ENCODE measurements at regions of chr4 and their contacts with region 1.

Region 1: DNA sequence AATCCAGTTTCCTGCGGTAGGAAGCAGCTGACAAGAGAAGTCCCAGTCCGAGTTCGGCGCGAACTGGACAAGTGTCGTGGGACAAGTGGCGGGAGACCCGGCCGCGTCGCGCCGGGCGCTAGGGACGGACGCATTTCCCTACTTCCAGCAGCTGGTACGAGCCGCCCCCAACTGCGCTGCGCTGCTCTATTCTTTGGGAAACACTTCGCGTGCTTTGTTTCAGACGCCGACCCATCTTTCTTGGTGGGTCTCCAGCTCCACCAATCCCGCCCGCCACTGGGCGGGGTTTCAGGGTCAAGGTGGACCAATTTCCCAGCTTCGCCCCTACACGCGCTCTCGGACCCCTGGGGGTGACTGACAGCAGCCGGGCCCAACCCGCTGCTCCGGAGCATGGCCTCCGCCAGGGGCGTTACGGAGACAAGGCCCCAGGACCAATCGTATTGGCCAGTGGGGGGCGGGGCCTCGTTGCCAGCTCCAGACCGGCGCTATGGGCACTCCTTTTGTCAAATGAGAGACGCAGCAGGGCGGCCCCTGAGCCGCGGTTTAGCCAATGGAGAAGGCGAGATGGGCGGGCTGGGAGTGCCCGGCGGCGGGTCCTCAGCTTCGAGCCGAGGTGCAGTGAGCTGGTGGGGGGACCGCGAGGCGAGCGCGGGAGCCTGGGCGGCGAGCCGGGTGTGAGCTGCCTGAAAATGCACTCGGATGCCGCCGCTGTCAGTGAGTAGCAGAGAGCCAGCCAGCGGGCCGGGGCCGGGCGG is at the start of gene DCUN1D4:
- DNase-seq: peak; percentile 93 to 98 (median 95)
- ATAC-seq: peak; percentile 94
- H3K4me3 ChIP-seq: peak within 1 kb of the TSS; percentile 85
- H3K4me3 Mint-ChIP-seq: peak within 1 kb of the TSS; percentile 92 to 100 (median 96)
- H3K27ac ChIP-seq: peak within 1 kb of the TSS; percentile 76
- H3K27ac Mint-ChIP-seq: peak within 1 kb of the TSS; percentile 87 to 98 (median 92)
- H3K4me1 ChIP-seq: peaks cover 4% of the 10 kb centered on the region in 2 donors
- H3K4me1 Mint-ChIP-seq: peaks cover 9 to 29% (median 23%) of the 10 kb centered on the region in 7 donors
- H3K27me3 ChIP-seq: no peaks in the 10 kb centered on the region
- H3K27me3 Mint-ChIP-seq: peaks cover 0 to 11% (median 0%) of the 10 kb centered on the region in 5 donors
- total RNA-seq, gene DCUN1D4: 31.3 to 60.7 (median 35.3) TPM

Region 2: DNA sequence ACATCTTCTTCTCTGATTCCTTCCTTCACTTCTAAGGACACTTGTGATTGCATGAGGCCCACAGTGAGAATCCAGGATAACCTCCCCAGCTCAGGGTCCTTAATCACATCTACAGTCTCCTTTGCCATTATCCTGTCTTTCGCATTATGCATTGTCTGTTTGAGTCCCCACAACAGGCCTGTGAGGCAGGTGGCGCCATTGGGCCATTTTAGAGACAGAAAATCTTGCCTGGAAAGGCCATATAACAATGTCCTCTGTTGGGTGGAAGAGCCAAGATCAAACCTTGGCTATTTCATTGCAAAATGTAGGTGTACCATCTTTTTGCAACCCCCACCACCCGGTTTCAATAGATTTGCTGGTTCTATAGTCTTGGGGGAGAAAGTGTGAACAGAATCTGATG is 11.6 kb before region 1 on chr4:
- CTCF ChIA-PET with region 1: interaction called, 6 read pairs
- POLR2A ChIA-PET with region 1: no interaction called
- intact Hi-C with region 1: loop called in 1 of 2 experiments (anchors 1 kb)
- DNase-seq: peak; percentile 39 to 70 (median 58)
- ATAC-seq: peak; percentile 77
- H3K4me3 ChIP-seq: no peak overlapping the region
- H3K4me3 Mint-ChIP-seq: no peak overlapping the region
- H3K27ac ChIP-seq: no peak overlapping the region
- H3K27ac Mint-ChIP-seq: no peak overlapping the region
- H3K4me1 ChIP-seq: no peaks in the 10 kb centered on the region
- H3K4me1 Mint-ChIP-seq: no peaks in the 10 kb centered on the region
- H3K27me3 ChIP-seq: no peaks in the 10 kb centered on the region
- H3K27me3 Mint-ChIP-seq: peaks cover 0 to 15% (median 7%) of the 10 kb centered on the region in 5 donors

Region 3: GRCh38 chr4:52038103-52038912 is 195.6 kb after region 1 on chr4 and contains the start of gene SGCB:
- CTCF ChIA-PET with region 1: no interaction called
- POLR2A ChIA-PET with region 1: no interaction called
- intact Hi-C with region 1: loop called (anchors 1 kb)
- DNase-seq: peak; percentile 55 to 82 (median 69)
- ATAC-seq: peak; percentile 93
- H3K4me3 ChIP-seq: peak within 1 kb of the TSS; percentile 61
- H3K4me3 Mint-ChIP-seq: peak within 1 kb of the TSS; percentile 81 to 92 (median 89)
- H3K27ac ChIP-seq: peak within 1 kb of the TSS; percentile 38
- H3K27ac Mint-ChIP-seq: peak within 1 kb of the TSS; percentile 48 to 79 (median 76)
- H3K4me1 ChIP-seq: peaks cover 0 to 5% of the 10 kb centered on the region in 2 donors
- H3K4me1 Mint-ChIP-seq: peaks cover 18 to 37% (median 26%) of the 10 kb centered on the region in 7 donors
- H3K27me3 ChIP-seq: no peaks in the 10 kb centered on the region
- H3K27me3 Mint-ChIP-seq: peaks cover 20 to 41% (median 34%) of the 10 kb centered on the region in 5 donors
- total RNA-seq, gene SGCB: 3.6 to 11.6 (median 4.5) TPM

Region 4: DNA sequence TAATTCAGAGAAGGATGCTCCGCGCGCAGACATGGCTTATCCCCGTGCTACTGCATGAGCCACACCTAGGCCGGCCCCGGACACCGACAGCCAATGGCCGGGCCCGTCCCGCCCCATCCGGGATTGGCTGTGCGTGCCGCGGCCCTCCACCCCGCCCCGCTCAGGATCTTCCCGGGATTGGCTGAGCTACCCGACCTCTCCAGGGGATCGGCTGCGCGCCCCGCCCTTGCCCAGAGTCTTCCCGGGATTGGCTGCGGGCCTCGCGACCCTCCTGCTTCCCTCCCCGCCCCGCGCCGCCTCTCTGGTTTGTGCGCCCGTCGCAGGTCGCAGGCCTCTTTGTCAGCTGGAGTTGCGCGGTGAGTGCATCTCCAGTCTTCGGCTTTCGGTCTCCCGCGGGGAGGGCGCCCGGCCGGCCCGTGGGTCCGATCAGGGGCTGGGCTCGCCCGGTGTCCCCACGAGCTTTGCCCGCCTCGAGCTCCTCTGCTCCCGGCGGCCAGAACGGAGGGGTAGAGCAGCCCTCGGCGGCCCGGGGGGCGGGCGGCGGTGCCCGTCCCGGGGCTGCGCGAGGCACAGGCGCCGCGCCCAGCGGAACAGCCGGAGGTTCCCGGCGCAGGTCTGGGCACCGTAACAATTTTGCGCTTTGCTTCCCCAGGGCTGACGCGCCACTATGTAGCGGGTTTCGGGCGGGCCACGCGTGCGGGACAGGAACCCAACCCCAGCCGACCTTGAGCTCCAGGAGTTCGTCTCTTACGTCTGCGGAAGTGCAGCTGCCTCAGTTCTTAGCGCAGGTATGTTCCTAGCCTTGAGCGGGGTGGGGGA is 869.6 kb after region 1 on chr4:
- CTCF ChIA-PET with region 1: no interaction called
- POLR2A ChIA-PET with region 1: interaction called, 13 read pairs
- intact Hi-C with region 1: loop called (anchors 1 kb)
- DNase-seq: peak; percentile 81 to 97 (median 95)
- ATAC-seq: peak; percentile 96
- H3K4me3 ChIP-seq: peak overlapping the region; percentile 73
- H3K4me3 Mint-ChIP-seq: peak overlapping the region; percentile 82 to 96 (median 92)
- H3K27ac ChIP-seq: peak overlapping the region; percentile 81
- H3K27ac Mint-ChIP-seq: peak overlapping the region; percentile 87 to 98 (median 96)
- H3K4me1 ChIP-seq: peaks cover 23 to 24% of the 10 kb centered on the region in 2 donors
- H3K4me1 Mint-ChIP-seq: peaks cover 23 to 46% (median 38%) of the 10 kb centered on the region in 7 donors
- H3K27me3 ChIP-seq: no peaks in the 10 kb centered on the region
- H3K27me3 Mint-ChIP-seq: peaks cover 0 to under 1% (median 0%) of the 10 kb centered on the region in 5 donors

Region 5: GRCh38 chr4:52861879-52862616 is 1019.3 kb after region 1 on chr4 and contains the start of gene RASL11B:
- CTCF ChIA-PET with region 1: no interaction called
- POLR2A ChIA-PET with region 1: no interaction called
- intact Hi-C with region 1: loop called (anchors 1 to 5 kb)
- DNase-seq: peak; percentile 73 to 91 (median 84)
- ATAC-seq: peak; percentile 99
- H3K4me3 ChIP-seq: peak within 1 kb of the TSS; percentile 58
- H3K4me3 Mint-ChIP-seq: peak within 1 kb of the TSS; percentile 74 to 88 (median 84)
- H3K27ac ChIP-seq: peak within 1 kb of the TSS; percentile 34
- H3K27ac Mint-ChIP-seq: peak within 1 kb of the TSS in 5 of 9 donors; percentile 16 to 87 (median 49)
- H3K4me1 ChIP-seq: peaks cover 0 to 6% of the 10 kb centered on the region in 2 donors
- H3K4me1 Mint-ChIP-seq: peaks cover 0 to 17% (median 8%) of the 10 kb centered on the region in 7 donors
- H3K27me3 ChIP-seq: no peaks in the 10 kb centered on the region
- H3K27me3 Mint-ChIP-seq: peaks cover 28 to 41% (median 38%) of the 10 kb centered on the region in 5 donors
- total RNA-seq, gene RASL11B: 0.41 TPM in 1 of 5 experiments, not detected in the others

Region 6: GRCh38 chr4:53377319-53378170 is 1534.8 kb after region 1 on chr4 and contains the start of gene FIP1L1:
- CTCF ChIA-PET with region 1: no interaction called
- POLR2A ChIA-PET with region 1: no interaction called
- intact Hi-C with region 1: loop called in 1 of 2 experiments (anchors 5 kb)
- DNase-seq: peak; percentile 92 to 97 (median 96)
- ATAC-seq: peak; percentile 97
- H3K4me3 ChIP-seq: peak within 1 kb of the TSS; percentile 85
- H3K4me3 Mint-ChIP-seq: peak within 1 kb of the TSS; percentile 94 to 100 (median 99)
- H3K27ac ChIP-seq: peak within 1 kb of the TSS; percentile 89
- H3K27ac Mint-ChIP-seq: peak within 1 kb of the TSS; percentile 97 to 100 (median 99)
- H3K4me1 ChIP-seq: peaks cover 17 to 21% of the 10 kb centered on the region in 2 donors
- H3K4me1 Mint-ChIP-seq: peaks cover 20 to 53% (median 37%) of the 10 kb centered on the region in 7 donors
- H3K27me3 ChIP-seq: no peaks in the 10 kb centered on the region
- H3K27me3 Mint-ChIP-seq: peaks cover 0 to 15% (median 4%) of the 10 kb centered on the region in 5 donors
- total RNA-seq, gene FIP1L1: 57.1 to 91.0 (median 78.7) TPM